Right ventricle myocardium inferior (tissue), 1 donor: ENCODE measurements at regions of chr6 and their contacts with region 1.

Region 1: DNA sequence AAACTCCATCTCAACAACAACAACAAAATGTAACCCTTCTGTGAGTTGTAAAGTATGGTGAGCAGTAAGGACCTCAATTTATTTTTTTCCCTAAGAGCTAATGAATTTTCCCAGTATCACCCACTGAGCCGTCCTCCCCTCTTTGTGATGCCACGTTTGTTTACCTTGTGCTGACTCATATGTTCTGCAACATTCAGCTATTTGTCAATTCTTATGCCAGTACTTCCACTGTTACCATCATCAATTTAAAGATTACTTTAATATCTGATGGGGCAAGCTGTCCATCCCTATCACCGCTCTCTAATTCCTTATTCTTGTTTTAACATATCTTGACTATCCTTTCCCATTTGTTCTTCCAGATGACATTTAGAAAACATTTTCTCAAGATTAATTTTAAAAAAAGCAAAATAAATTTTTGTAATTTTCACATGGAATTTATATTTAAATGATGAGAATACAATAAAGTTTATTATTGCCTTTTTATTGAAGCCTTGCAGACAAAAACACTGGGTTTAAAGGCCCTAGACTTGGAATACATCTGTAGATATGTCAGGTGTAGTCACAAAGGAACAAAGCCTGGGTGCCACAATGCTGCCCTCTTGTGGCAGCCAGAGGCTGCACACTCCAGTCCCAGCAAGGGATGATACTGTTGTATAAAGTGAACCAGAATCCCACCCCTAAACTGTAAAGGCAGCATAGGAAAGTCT is 37.4 kb downstream of the MAK start:
- DNase-seq: peak; percentile 78
- ATAC-seq: peak; percentile 78

Region 2: GRCh38 chr6:10478187-10479040 is 322.6 kb before region 1 on chr6:
- intact Hi-C with region 1: loop called (anchors 2 kb)
- DNase-seq: no peak
- ATAC-seq: no peak

Region 3: GRCh38 chr6:10505529-10505928 is 295.5 kb before region 1 on chr6:
- intact Hi-C with region 1: loop called (anchors 10 kb)
- DNase-seq: no peak
- ATAC-seq: no peak

Region 4: GRCh38 chr6:10759312-10759839 is 41.6 kb before region 1 on chr6:
- intact Hi-C with region 1: no loop called
- DNase-seq: no peak
- ATAC-seq: peak; percentile 37

Region 5: DNA sequence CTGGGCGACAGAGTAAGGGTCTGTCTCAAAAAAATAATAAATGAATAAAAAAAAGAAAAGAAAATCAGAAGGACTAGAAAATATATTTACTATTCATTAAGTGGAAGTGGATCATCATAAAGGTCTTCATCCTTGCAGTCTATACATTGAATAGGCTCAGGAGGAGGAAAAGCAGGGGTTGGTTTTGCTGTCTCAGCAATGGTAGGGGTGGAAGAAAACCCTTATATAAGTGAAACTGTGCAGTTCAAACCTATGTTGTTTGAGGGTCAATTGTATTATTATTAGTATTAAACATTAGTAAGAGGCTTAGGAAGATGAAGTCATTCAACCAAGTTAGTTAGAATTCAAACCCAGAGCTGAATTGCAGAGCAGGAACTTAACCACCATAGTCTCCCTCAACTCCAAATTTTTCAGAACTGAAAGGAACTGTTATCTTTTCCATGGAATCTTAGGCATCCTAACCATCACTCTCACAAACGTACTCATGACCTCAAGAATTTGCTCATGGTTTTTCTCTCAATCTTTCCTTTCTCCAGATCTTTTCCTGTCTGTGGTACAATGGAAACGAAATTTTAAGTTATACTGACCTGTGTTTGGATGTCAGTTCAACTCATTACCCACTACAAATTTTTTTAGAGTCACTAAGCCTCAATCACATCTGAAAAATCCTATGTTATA is 284.9 kb after region 1 on chr6:
- intact Hi-C with region 1: no loop called
- DNase-seq: no peak
- ATAC-seq: no peak

Region 6: GRCh38 chr6:11381801-11382513 is 581.0 kb after region 1 on chr6:
- intact Hi-C with region 1: no loop called
- DNase-seq: peak; percentile 79
- ATAC-seq: peak; percentile 73